H1 (cell line): ENCODE measurements at regions of chr3 and their contacts with region 1.

Region 1: GRCh38 chr3:109355625-109356441 is 18.5 kb upstream of the DPPA4 start:
- DNase-seq: peak in 1 of 2 experiments; percentile 92
- H3K4me3 ChIP-seq: peak overlapping the region in 3 of 4 experiments; percentile 15 to 48 (median 26); a peak in 4 of 8 replicates
- H3K27ac ChIP-seq: peak overlapping the region; percentile 36; the same call in 1 of the 2 replicates
- H3K4me1 ChIP-seq: peaks cover 2 to 12% (median 7%) of the 10 kb centered on the region in 4 experiments; a peak in 6 of 7 replicates
- H3K27me3 ChIP-seq: no peaks in the 10 kb centered on the region
- CTCF ChIP-seq: no peak
- EP300 ChIP-seq: no peak
- POLR2A ChIP-seq: peak in 1 of 2 experiments; percentile 11
- RAD21 ChIP-seq: no peak

Region 2: DNA sequence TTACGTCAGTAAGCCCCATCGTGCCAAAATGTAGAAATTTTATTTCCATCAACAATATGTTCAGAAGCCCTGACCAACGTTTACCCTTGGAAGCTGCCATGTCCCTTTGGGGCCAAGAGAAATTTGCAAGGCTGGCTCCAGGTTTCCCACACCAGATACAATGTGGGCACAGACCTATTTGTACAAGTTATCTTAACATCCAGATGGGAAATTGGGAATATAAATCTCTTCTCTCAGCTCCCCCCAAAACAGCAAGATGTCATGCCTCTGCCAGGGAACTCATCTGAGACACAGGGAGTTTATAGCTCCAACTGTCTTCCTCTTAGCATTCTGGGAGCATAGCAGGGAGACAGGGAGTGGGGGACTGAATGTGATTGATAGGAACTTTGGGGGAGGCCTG is 30.2 kb before region 1 on chr3:
- CTCF ChIA-PET with region 1: no interaction called
- POLR2A ChIA-PET with region 1: interaction called, 402 read pairs
- DNase-seq: peak in 1 of 2 experiments; percentile 60
- H3K4me3 ChIP-seq: no peak overlapping the region
- H3K27ac ChIP-seq: no peak overlapping the region
- H3K4me1 ChIP-seq: no peaks in the 10 kb centered on the region; a peak in 1 of 7 replicates
- H3K27me3 ChIP-seq: no peaks in the 10 kb centered on the region
- CTCF ChIP-seq: no peak
- EP300 ChIP-seq: no peak
- POLR2A ChIP-seq: peak; percentile 54 to 86; a peak in 2 of 3 replicates
- RAD21 ChIP-seq: no peak